ENCODE measurements at regions of chr1 and their contacts with region 1.

Region 1: GRCh38 chr1:27392096-27392777 is at the start of gene GPR3:
- DNase-seq: peak; percentile 92 to 93
- ATAC-seq: peak; percentile 87 to 92 (median 90)
- H3K4me3 ChIP-seq: peak within 1 kb of the TSS; percentile 26 to 69 (median 55)
- H3K27ac ChIP-seq: peak within 1 kb of the TSS; percentile 5 to 82 (median 76)
- H3K4me1 ChIP-seq: peaks cover 7 to 50% (median 36%) of the 10 kb centered on the region in 9 donors
- H3K27me3 ChIP-seq: no peaks in the 10 kb centered on the region
- CTCF ChIP-seq: peak; percentile 22 to 79 (median 58)
- total RNA-seq, gene GPR3: 0.27 to 2.0 (median 0.42) TPM in 9 of 10 donors, not detected in the other

Region 2: DNA sequence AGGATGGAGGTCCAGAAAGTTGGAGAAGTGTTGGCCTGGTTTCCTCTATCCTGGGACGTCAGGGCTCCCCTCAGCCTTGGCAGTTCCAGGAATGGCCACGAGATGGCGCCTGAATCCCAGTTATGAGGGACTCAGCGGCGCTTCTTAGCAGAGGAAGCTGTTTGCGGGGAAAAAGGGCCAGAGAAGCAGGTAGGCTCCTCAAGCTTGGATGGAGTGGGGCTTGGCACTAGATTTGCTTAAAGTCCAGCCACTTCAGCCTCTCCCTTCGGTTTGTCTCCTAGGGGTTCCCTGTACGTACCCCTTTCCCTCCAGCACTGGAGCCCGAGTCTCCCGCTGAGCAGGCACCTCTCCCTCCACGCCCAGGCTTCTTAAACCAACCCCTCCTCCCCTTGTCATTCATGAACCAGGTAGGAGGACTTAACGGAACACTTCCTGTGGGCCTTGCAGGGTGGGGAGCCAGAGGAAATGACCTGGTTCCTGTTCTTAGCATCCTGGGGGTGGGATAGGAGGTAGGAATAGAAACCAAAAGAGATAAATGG is 347.6 kb before region 1 on chr1:
- intact Hi-C with region 1: loop called in 2 of 10 experiments (anchors 10 kb)
- DNase-seq: peak; percentile 90 to 92
- ATAC-seq: peak; percentile 86 to 97 (median 92)
- H3K4me3 ChIP-seq: peak overlapping the region in 8 of 10 donors; percentile 3 to 39 (median 32)
- H3K27ac ChIP-seq: peak overlapping the region in 7 of 10 donors; percentile 6 to 61 (median 24)
- H3K4me1 ChIP-seq: peaks cover 0 to 34% (median 18%) of the 10 kb centered on the region in 9 donors
- H3K27me3 ChIP-seq: peaks cover 0 to 5% (median 0%) of the 10 kb centered on the region in 7 donors
- CTCF ChIP-seq: peak; percentile 96 to 100 (median 99)

Region 3: GRCh38 chr1:27111626-27112573 is 280.3 kb before region 1 on chr1:
- intact Hi-C with region 1: loop called in 4 of 10 experiments (anchors 10 kb)
- DNase-seq: peak; percentile 65 to 77
- ATAC-seq: peak; percentile 77 to 95 (median 90)
- H3K4me3 ChIP-seq: no peak overlapping the region
- H3K27ac ChIP-seq: peak overlapping the region in 8 of 10 donors; percentile 21 to 79 (median 55)
- H3K4me1 ChIP-seq: peaks cover 11 to 71% (median 33%) of the 10 kb centered on the region in 9 donors
- H3K27me3 ChIP-seq: no peaks in the 10 kb centered on the region
- CTCF ChIP-seq: peak in 5 of 9 donors; percentile 17 to 49 (median 34)

Region 4: GRCh38 chr1:27127419-27127818 is 264.8 kb before region 1 on chr1:
- intact Hi-C with region 1: no loop called
- DNase-seq: no peak
- ATAC-seq: no peak
- H3K4me3 ChIP-seq: no peak overlapping the region
- H3K27ac ChIP-seq: peak overlapping the region in 1 of 10 donors; percentile 22
- H3K4me1 ChIP-seq: peaks cover under 1 to 47% (median 16%) of the 10 kb centered on the region in 9 donors
- H3K27me3 ChIP-seq: no peaks in the 10 kb centered on the region
- CTCF ChIP-seq: peak in 3 of 9 donors; percentile 16 to 28 (median 21)

Region 5: GRCh38 chr1:27241677-27242076 is 150.6 kb before region 1 on chr1:
- intact Hi-C with region 1: no loop called
- DNase-seq: no peak
- ATAC-seq: no peak
- H3K4me3 ChIP-seq: no peak overlapping the region
- H3K27ac ChIP-seq: no peak overlapping the region
- H3K4me1 ChIP-seq: peaks cover 0 to 20% (median 6%) of the 10 kb centered on the region in 9 donors
- H3K27me3 ChIP-seq: no peaks in the 10 kb centered on the region
- CTCF ChIP-seq: no peak

Region 6: GRCh38 chr1:27284425-27285273 is 107.6 kb before region 1 on chr1:
- intact Hi-C with region 1: no loop called
- DNase-seq: peak; percentile 78 to 83
- ATAC-seq: peak; percentile 75 to 89 (median 86)
- H3K4me3 ChIP-seq: no peak overlapping the region
- H3K27ac ChIP-seq: no peak overlapping the region
- H3K4me1 ChIP-seq: no peaks in the 10 kb centered on the region
- H3K27me3 ChIP-seq: no peaks in the 10 kb centered on the region
- CTCF ChIP-seq: peak; percentile 70 to 91 (median 85)

Region 7: GRCh38 chr1:27321813-27322577 is 70.2 kb before region 1 on chr1 and contains the start of gene TMEM222:
- intact Hi-C with region 1: loop called in 1 of 10 experiments (anchors 5 kb)
- DNase-seq: peak; percentile 97 to 98
- ATAC-seq: peak; percentile 98 to 100 (median 99)
- H3K4me3 ChIP-seq: peak within 1 kb of the TSS; percentile 68 to 97 (median 86)
- H3K27ac ChIP-seq: peak within 1 kb of the TSS; percentile 81 to 96 (median 92)
- H3K4me1 ChIP-seq: peaks cover 5 to 57% (median 36%) of the 10 kb centered on the region in 9 donors
- H3K27me3 ChIP-seq: no peaks in the 10 kb centered on the region
- CTCF ChIP-seq: peak in 8 of 9 donors; percentile 6 to 44 (median 26)
- total RNA-seq, gene TMEM222: 24.1 to 32.8 (median 26.4) TPM

Region 8: DNA sequence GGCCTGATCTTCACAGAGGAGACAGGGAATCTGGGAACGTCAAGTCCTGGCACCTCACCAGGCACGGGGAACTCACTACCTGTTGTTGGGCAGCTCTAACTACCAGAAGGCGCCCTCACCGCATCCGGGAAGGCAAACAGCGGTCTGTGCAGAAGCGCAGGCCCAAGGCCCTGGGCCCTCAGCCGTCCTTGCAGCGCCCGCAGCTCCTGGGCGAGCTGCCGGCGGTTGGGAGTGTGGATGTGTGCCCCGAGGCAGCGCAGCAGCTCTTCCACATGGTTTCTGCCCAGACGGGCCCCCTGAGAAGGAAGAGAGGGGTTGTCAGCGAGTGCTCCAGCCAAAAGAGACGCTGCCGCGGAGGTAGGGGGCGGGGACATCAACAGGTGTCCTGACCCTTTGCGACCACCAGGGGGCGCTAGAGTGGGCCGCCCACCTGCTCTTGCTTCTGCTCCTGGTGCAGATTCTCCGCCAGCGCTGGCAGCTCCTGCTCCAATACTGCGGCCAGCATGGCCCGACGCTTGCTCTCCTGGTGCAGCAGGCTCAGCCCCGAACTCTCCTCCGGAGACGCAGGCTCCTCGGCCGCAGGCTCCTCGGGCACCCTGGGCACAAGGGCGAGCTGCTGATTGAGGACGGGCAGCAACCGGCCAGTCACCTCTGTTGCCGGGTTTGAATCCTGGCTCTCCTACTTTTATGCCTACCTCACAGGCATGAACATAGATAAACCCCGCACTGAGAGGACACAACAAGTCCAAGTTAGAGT is 34.8 kb before region 1 on chr1:
- intact Hi-C with region 1: loop called in 8 of 10 experiments (anchors 5 kb)
- DNase-seq: peak; percentile 69 to 76
- ATAC-seq: peak; percentile 33 to 87 (median 69)
- H3K4me3 ChIP-seq: peak overlapping the region in 2 of 10 donors; percentile 15 to 41
- H3K27ac ChIP-seq: peak overlapping the region in 2 of 10 donors; percentile 21 to 36
- H3K4me1 ChIP-seq: peaks cover 0 to 29% (median 10%) of the 10 kb centered on the region in 9 donors
- H3K27me3 ChIP-seq: no peaks in the 10 kb centered on the region
- CTCF ChIP-seq: peak; percentile 94 to 100 (median 98)

Region 9: GRCh38 chr1:27430903-27431600 is 38.8 kb after region 1 on chr1:
- intact Hi-C with region 1: no loop called
- DNase-seq: peak in 1 of 2 donors; percentile 50
- ATAC-seq: peak; percentile 13 to 76 (median 38)
- H3K4me3 ChIP-seq: peak overlapping the region in 3 of 10 donors; percentile 8 to 30 (median 19)
- H3K27ac ChIP-seq: peak overlapping the region; percentile 78 to 88 (median 86)
- H3K4me1 ChIP-seq: peaks cover 31 to 100% (median 97%) of the 10 kb centered on the region in 9 donors
- H3K27me3 ChIP-seq: no peaks in the 10 kb centered on the region
- CTCF ChIP-seq: peak in 3 of 9 donors; percentile 37 to 46 (median 43)

Region 10: GRCh38 chr1:27662707-27663393 is 270.6 kb after region 1 on chr1:
- intact Hi-C with region 1: loop called in 5 of 10 experiments (anchors 5 to 10 kb)
- DNase-seq: peak; percentile 73 to 86
- ATAC-seq: peak; percentile 49 to 75 (median 68)
- H3K4me3 ChIP-seq: no peak overlapping the region
- H3K27ac ChIP-seq: peak overlapping the region in 9 of 10 donors; percentile 23 to 85 (median 76)
- H3K4me1 ChIP-seq: peaks cover 8 to 65% (median 38%) of the 10 kb centered on the region in 9 donors
- H3K27me3 ChIP-seq: no peaks in the 10 kb centered on the region
- CTCF ChIP-seq: peak; percentile 85 to 94 (median 91)